Mammary epithelial cell (primary cell): ENCODE measurements at regions of chr10 and their contacts with region 1.

Region 1: GRCh38 chr10:60434418-60435046 is 44.9 kb upstream of the ANK3 start:
- DNase-seq: peak; percentile 32
- H3K4me3 ChIP-seq: no peak overlapping the region
- H3K27ac ChIP-seq: no peak overlapping the region
- H3K4me1 ChIP-seq: peaks cover 16% of the 10 kb centered on the region
- H3K27me3 ChIP-seq: no peaks in the 10 kb centered on the region
- CTCF ChIP-seq: peak; percentile 54 to 68

Region 2: GRCh38 chr10:60099998-60100747 is 334.4 kb before region 1 on chr10:
- CTCF ChIA-PET with region 1: no interaction called
- dilution Hi-C with region 1: loop called (anchors 25 kb)
- in situ Hi-C with region 1: loop called in 1 of 2 experiments (anchors 10 kb)
- intact Hi-C with region 1: loop called (anchors 1 kb)
- DNase-seq: peak; percentile 23
- H3K4me3 ChIP-seq: no peak overlapping the region
- H3K27ac ChIP-seq: no peak overlapping the region
- H3K4me1 ChIP-seq: no peaks in the 10 kb centered on the region
- H3K27me3 ChIP-seq: no peaks in the 10 kb centered on the region
- CTCF ChIP-seq: peak; percentile 43 to 59

Region 3: DNA sequence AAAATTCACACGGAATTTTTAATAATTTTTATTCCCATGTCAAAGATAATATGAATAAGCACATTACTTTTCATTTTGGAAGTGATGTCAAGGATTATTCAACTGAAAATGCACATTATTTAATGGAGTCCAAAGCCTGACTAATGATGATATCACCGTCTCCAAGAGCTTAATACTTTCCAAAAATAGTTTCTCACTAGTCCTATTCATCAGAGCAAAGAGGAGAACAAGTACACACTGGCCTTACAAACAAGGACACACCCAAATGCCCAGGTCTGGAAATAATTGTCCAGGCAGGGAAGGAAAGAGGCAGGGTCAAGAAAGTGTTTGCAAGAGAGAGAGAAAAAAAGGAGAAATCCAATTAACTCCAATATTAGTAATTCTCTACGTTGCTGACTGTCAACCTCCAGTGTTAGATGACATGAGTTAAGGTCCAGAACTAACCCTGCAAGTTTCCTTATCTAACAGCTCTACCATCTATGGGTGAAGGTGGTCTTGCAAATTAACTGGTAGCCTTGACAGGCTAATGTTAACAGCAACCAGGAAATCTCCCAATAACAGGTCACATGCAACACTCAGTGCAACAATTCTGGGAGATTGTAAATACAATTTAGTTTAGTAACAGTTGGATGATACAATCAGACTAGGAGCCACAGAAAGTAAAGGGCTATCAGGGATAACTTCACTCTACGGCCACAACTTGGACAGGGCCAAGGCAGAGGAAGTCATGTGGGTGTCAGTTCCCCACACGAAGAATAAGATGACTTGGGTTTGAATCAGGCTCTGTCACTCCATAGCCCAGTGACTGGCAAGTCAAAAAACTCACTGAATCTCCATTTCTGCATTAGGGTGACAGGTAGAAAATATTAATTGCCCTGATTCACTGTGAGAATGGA is 311.1 kb before region 1 on chr10:
- CTCF ChIA-PET with region 1: no interaction called
- dilution Hi-C with region 1: loop called (anchors 25 kb)
- in situ Hi-C with region 1: loop called in 1 of 2 experiments (anchors 10 kb)
- intact Hi-C with region 1: no loop called
- DNase-seq: peak; percentile 95
- H3K4me3 ChIP-seq: no peak overlapping the region
- H3K27ac ChIP-seq: peak overlapping the region; percentile 79
- H3K4me1 ChIP-seq: peaks cover 16% of the 10 kb centered on the region
- H3K27me3 ChIP-seq: no peaks in the 10 kb centered on the region
- CTCF ChIP-seq: no peak

Region 4: DNA sequence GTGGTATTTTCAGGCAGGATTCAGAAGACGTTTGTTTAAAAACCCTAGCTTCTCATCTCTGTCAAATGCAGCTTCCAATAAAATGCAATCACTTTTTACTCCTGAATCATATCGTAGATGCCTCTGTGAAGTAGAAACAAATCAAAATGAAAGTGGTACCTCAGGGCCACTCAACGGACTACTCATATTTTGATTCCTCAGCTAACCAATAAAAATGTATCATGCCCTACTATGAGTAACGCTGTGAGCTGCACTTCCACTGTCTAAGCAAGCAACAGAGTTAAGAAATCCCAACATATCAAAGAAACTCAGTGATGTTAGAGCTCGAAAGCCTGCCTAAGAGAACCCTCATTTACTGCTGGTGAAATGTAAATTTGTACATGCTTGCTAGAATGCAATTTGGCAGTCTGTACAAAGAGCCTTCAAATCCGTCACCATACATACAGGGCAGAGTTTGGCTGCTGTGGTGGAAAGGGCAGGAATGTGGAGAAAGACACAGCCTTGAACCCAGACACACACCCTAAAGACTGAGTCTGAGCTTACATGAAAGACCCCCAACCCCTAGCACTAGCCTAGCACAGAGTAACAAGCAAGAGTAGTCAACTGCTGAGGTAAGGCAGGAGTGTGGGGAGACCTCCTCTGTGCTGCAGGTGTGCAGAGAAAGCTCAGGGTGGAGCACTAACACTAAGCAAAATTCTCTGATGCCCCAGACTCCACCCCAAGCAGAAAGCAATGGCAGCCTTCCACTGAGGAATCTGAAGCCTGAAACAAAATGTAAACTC is 196.4 kb before region 1 on chr10:
- CTCF ChIA-PET with region 1: interaction called, 6 read pairs
- dilution Hi-C with region 1: no loop called
- in situ Hi-C with region 1: loop called in 1 of 2 experiments (anchors 10 kb)
- intact Hi-C with region 1: loop called (anchors 1 kb)
- DNase-seq: peak; percentile 24
- H3K4me3 ChIP-seq: no peak overlapping the region
- H3K27ac ChIP-seq: no peak overlapping the region
- H3K4me1 ChIP-seq: peaks cover 4% of the 10 kb centered on the region
- H3K27me3 ChIP-seq: no peaks in the 10 kb centered on the region
- CTCF ChIP-seq: peak; percentile 22 to 55

Region 5: GRCh38 chr10:60335708-60336107 is 98.8 kb before region 1 on chr10:
- CTCF ChIA-PET with region 1: no interaction called
- dilution Hi-C with region 1: no loop called
- in situ Hi-C with region 1: no loop called
- intact Hi-C with region 1: loop called (anchors 1 kb)
- DNase-seq: no peak
- H3K4me3 ChIP-seq: no peak overlapping the region
- H3K27ac ChIP-seq: no peak overlapping the region
- H3K4me1 ChIP-seq: no peaks in the 10 kb centered on the region
- H3K27me3 ChIP-seq: no peaks in the 10 kb centered on the region
- CTCF ChIP-seq: peak; percentile 19 to 48

Region 6: DNA sequence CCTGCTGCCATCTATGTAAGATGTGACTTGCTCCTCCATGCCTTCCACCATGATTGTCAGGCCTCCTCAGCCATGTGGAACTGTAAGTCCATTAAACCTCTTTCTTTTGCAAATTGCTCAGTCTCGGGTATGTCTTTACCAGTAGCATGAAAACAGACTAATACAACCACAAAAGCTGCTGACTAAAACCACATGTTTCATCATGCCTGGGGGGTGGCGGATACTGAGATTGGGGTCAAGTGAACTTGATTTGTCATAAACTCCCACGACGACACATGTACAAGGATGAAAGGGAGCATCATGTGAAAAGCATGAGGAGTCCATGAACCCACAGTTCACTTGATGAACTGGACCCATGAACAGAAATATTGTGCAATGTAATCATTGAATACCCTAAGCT is 90.0 kb after region 1 on chr10:
- CTCF ChIA-PET with region 1: no interaction called
- dilution Hi-C with region 1: no loop called
- in situ Hi-C with region 1: no loop called
- intact Hi-C with region 1: no loop called
- DNase-seq: peak; percentile 93
- H3K4me3 ChIP-seq: no peak overlapping the region
- H3K27ac ChIP-seq: no peak overlapping the region
- H3K4me1 ChIP-seq: peaks cover 5% of the 10 kb centered on the region
- H3K27me3 ChIP-seq: no peaks in the 10 kb centered on the region
- CTCF ChIP-seq: no peak